Gastrocnemius medialis (tissue), 4 donors: ENCODE measurements at regions of chr6 and their contacts with region 1.

Region 1: GRCh38 chr6:139291813-139292619 is at the start of gene TXLNB:
- DNase-seq: peak; percentile 94 to 97
- ATAC-seq: peak; percentile 78 to 79
- H3K4me3 ChIP-seq: peak within 1 kb of the TSS; percentile 47 to 57 (median 50)
- H3K27ac ChIP-seq: peak within 1 kb of the TSS; percentile 92 to 96 (median 94)
- H3K4me1 ChIP-seq: peaks cover 32 to 40% of the 10 kb centered on the region in 2 donors
- H3K27me3 ChIP-seq: no peaks in the 10 kb centered on the region
- CTCF ChIP-seq: peak in 3 of 5 experiments; percentile 16 to 34 (median 24)
- POLR2A ChIP-seq: peak; percentile 70 to 83
- total RNA-seq, gene TXLNB: 58.3 to 197 (median 124) TPM

Region 2: DNA sequence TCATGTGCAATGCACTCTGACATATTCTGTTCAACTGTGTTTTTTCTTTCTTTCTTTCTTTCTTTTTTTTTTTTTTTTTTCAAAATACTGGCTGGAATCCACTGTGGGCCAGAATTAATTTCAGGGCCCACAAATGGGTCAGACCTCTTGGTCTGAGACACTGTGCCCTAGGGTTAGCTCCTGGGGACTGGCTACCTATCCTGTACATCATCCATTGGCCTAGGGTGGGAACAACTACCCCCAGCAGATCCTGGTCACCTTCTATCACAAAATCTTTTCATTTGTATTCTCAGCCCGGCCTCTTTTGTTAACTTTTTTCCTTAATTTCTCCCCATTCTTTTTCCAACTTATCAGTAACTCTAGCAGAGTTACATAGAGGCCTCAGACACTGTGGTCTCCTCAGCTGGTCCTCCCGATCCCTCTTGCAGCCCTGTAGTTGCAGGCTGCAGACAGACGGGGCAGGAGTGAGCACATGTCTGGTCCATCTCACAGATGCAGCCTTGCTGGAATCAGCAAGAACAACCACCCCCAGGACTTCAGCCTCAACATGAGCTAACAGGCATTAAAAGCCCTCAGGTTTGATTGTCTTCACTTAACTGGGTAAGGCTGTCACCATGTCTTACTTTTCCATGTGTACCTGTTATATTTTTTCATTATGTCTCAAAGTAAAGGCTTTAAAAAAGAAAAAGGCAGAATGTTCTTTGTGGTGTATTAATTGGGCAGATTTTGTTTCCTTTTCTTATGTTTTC is 41.5 kb before region 1 on chr6:
- in situ Hi-C with region 1: no loop called
- intact Hi-C with region 1: loop called (anchors 5 kb)
- DNase-seq: peak; percentile 38 to 73
- ATAC-seq: peak; percentile 59 to 84
- H3K4me3 ChIP-seq: peak overlapping the region in 1 of 4 donors; percentile 16
- H3K27ac ChIP-seq: peak overlapping the region; percentile 71 to 84 (median 82)
- H3K4me1 ChIP-seq: peaks cover 24 to 25% of the 10 kb centered on the region in 2 donors
- H3K27me3 ChIP-seq: no peaks in the 10 kb centered on the region
- CTCF ChIP-seq: peak; percentile 42 to 84 (median 73)
- POLR2A ChIP-seq: no peak

Region 3: DNA sequence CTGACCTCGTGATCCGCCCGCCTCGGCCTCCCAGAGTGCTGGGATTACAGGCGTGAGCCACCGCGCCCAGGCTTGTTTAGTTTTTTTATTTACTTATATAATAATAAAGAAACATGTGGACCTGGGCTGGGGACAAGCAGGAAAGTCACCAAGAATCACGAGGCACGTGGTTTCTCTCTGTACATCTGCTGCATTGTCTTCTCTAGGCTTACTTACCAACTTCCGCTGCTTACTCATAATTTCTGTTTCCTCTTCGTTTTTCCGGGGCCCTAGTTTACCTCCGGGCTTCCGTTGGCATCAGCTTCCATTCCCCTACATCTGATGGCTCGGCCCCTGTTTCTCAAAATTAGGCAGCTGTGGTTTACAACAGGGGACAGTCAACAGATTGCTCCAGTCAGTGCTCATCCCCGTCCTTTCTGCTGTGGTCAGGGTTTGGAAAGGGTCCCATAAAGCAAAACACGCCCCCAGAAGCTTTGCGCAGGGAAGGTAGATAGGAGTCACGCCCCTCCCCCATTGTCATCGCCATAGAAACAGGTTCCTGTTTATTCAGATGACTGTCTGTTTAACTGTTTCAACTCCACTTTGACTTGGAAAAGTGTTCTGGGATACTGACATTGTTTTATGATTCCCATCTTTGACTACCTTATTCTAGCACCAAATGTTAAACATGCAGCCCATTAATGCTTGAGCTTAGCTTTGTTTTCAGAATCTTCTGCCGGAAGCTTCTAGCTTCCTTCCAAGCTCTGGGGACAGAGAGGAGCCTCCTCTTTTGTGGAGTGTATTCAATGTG is 31.7 kb after region 1 on chr6:
- in situ Hi-C with region 1: no loop called
- intact Hi-C with region 1: no loop called
- DNase-seq: peak; percentile 38 to 56
- ATAC-seq: peak; percentile 64 to 76
- H3K4me3 ChIP-seq: peak overlapping the region; percentile 29 to 53 (median 43)
- H3K27ac ChIP-seq: peak overlapping the region; percentile 40 to 62 (median 56)
- H3K4me1 ChIP-seq: no peaks in the 10 kb centered on the region
- H3K27me3 ChIP-seq: no peaks in the 10 kb centered on the region
- CTCF ChIP-seq: no peak
- POLR2A ChIP-seq: no peak

Region 4: DNA sequence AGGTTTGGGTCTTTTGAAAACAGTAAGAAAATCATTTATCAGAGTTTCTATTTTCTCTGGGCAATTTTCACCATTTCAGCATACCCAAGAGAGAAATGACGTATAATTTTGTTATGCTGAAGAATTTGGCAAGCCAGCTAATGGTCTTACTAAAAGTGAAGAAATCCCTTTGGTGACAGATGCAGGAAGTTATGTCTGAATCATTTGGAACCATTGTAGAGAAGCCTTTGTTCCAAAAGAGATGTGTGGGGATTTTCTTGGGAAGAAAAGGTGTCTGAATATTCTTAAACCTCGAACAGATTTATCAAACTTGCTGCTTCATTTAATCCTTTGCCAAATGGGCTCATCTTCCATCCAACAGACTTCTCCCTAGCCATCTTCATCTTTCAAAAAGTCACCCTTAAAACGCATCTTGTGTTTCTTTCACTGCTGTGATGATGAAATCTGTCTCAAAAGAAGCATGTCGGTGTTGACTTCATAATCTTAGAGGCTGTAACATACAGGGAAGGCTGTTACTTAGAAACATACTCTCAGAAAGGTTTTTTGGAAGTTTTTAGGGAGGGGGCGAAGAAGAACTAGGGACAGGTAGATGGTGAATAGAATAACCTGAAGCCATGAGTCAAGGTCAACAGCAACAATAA is 42.9 kb after region 1 on chr6:
- in situ Hi-C with region 1: no loop called
- intact Hi-C with region 1: loop called (anchors 2 kb)
- DNase-seq: peak in 1 of 2 donors; percentile 23
- ATAC-seq: peak; percentile 49 to 53
- H3K4me3 ChIP-seq: no peak overlapping the region
- H3K27ac ChIP-seq: peak overlapping the region; percentile 26 to 69 (median 52)
- H3K4me1 ChIP-seq: peaks cover 14 to 43% of the 10 kb centered on the region in 2 donors
- H3K27me3 ChIP-seq: no peaks in the 10 kb centered on the region
- CTCF ChIP-seq: no peak
- POLR2A ChIP-seq: no peak

Region 5: GRCh38 chr6:140052756-140053729 is 761.0 kb after region 1 on chr6:
- in situ Hi-C with region 1: no loop called
- intact Hi-C with region 1: loop called (anchors 5 kb)
- DNase-seq: no peak
- ATAC-seq: peak; percentile 56 to 64
- H3K4me3 ChIP-seq: no peak overlapping the region
- H3K27ac ChIP-seq: peak overlapping the region in 2 of 4 donors; percentile 11 to 36
- H3K4me1 ChIP-seq: no peaks in the 10 kb centered on the region
- H3K27me3 ChIP-seq: no peaks in the 10 kb centered on the region
- CTCF ChIP-seq: no peak
- POLR2A ChIP-seq: no peak

Region 6: DNA sequence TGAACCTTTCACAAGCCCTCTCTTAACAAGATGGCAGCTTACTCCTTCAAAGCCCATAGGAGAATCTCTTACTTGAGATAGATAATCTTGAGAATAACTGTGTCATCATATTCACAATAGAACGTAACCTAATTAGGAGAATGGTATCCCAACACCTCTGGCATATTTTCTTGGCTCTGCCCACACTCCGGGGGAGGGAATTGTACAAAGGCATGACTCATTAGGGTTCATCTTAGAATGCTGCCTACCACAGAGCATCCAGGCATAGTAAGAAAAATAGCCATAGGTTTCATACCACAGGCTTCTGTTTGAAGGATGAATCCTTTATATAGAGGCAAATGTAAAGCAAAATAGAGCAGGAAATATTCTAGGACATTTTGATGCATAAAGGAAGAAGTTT is 1183.1 kb after region 1 on chr6:
- in situ Hi-C with region 1: no loop called
- intact Hi-C with region 1: no loop called
- DNase-seq: no peak
- ATAC-seq: no peak
- H3K4me3 ChIP-seq: no peak overlapping the region
- H3K27ac ChIP-seq: no peak overlapping the region
- H3K4me1 ChIP-seq: no peaks in the 10 kb centered on the region
- H3K27me3 ChIP-seq: no peaks in the 10 kb centered on the region
- CTCF ChIP-seq: no peak
- POLR2A ChIP-seq: no peak